Activated CD4-positive, alpha-beta T cell treated with anti-CD3 and anti-CD28 coated beads, Interleukin-2, amount 10 ng/mL, durations not matched to agents 24 days and 14 days (primary cell): ENCODE measurements at regions of chr10 and their contacts with region 1.

Region 1: GRCh38 chr10:31031558-31032257 is at the start of gene ZNF438:
- DNase-seq: peak; percentile 98
- H3K4me3 Mint-ChIP-seq: peak within 1 kb of the TSS; percentile 89
- H3K27ac Mint-ChIP-seq: peak within 1 kb of the TSS; percentile 98
- H3K4me1 Mint-ChIP-seq: peaks cover 9% of the 10 kb centered on the region
- H3K27me3 Mint-ChIP-seq: no peaks in the 10 kb centered on the region
- total RNA-seq, gene ZNF438: 2.4 and 3.2 TPM in 2 replicates

Region 2: DNA sequence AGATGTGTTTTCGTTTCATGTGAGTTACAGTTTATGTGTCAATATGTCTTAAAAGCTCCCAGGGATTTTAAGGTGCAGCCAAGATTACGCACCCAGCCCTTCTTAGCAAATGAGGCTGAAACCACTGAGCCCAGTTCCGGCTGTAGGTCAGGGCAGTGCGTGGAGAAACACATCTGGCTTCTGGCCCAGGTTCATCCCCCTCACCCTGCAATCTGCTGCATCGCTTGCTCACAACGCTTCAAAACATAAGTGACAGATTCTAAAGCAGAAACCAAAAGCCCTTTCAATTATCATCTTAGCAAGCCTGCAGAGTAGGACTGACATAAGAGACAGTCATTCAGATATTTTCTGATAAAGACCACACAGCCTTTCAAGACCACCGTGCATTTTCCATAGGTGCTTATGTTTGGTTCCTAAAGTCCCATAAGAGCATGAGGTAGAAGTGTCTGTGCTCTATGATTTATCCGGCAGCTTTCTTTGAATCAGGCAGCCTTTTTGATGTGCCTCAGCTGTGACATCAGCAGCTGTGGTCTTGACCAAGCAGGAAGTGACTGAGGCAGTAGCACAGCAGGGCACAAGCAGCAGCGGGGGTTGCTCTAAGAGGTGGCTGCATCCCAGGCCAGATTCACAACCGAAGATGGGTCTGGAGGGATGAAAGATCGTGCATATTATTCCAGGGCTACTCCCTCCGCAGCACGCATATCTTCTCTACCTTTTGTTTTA is 330.1 kb before region 1 on chr10:
- intact Hi-C with region 1: loop called (anchors 1 kb)
- DNase-seq: peak; percentile 92
- H3K4me3 Mint-ChIP-seq: peak overlapping the region; percentile 76
- H3K27ac Mint-ChIP-seq: peak overlapping the region; percentile 95
- H3K4me1 Mint-ChIP-seq: peaks cover 78% of the 10 kb centered on the region
- H3K27me3 Mint-ChIP-seq: no peaks in the 10 kb centered on the region

Region 3: DNA sequence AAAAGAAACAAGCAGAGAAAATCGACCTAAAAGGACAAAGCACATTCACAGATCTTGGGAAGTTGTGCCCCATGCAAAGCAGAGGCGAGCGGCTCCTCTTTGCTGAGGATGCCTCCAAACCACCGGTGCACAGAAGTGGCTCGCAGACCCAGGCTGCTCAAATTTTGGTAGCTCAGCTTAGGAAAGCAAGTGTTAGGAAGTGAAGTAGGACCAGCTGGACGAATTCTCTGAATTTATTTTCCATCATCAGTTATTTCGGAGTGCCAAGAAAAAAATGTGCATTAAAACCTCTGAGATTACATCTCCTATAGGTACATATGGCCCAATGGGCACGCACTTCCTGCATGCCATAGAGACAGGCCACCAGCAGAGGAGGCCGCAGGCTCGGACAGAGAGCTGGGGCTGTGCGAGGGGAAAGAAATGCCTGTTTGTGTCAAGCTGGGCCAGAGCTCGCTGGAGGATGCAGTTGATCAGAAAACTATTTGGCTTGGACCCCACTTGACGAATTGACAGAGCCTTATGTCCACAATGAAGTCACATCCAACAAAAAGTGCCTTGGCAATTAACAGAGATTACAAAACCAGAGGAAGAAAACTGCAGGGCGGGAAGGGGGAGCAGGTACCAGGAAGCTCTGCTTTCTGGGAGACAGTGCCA is 279.9 kb before region 1 on chr10:
- intact Hi-C with region 1: no loop called
- DNase-seq: no peak
- H3K4me3 Mint-ChIP-seq: peak overlapping the region; percentile 53
- H3K27ac Mint-ChIP-seq: peak overlapping the region; percentile 59
- H3K4me1 Mint-ChIP-seq: peaks cover 45% of the 10 kb centered on the region
- H3K27me3 Mint-ChIP-seq: no peaks in the 10 kb centered on the region

Region 4: DNA sequence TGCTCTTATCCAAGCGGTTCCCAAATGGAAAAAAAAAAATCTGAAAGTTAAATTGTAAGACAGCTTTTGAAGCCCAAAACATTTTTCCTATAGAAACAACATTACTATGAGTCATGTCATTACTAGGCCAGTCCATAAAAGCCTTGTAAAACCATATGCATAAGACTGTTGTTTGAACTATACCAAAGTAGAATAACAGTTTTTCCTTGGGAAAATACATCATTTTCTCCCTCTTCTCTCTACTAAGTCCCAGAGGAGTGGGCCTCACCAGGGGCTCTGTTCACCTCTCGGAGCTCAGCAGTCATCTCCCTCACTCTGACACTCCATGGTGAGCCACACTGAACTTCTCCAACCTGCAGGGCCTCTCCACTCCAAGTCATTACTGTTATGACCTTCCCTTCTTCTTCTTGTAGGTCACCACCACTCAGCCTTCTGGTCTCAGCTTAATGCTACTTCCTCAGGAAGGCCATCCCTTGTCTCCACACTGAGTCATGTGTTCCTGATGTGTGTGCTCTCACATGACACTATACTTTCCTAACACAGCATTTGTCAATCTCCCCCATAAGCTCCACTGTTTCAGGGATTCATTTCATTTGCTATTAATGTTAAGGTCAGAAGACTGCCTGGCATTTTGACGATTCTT is 32.5 kb before region 1 on chr10:
- intact Hi-C with region 1: loop called (anchors 1 kb)
- DNase-seq: peak; percentile 61
- H3K4me3 Mint-ChIP-seq: peak overlapping the region; percentile 75
- H3K27ac Mint-ChIP-seq: peak overlapping the region; percentile 94
- H3K4me1 Mint-ChIP-seq: peaks cover 40% of the 10 kb centered on the region
- H3K27me3 Mint-ChIP-seq: no peaks in the 10 kb centered on the region

Region 5: GRCh38 chr10:31133628-31134302 is 102.1 kb after region 1 on chr10:
- intact Hi-C with region 1: loop called (anchors 2 kb)
- DNase-seq: peak; percentile 85
- H3K4me3 Mint-ChIP-seq: peak overlapping the region; percentile 87
- H3K27ac Mint-ChIP-seq: peak overlapping the region; percentile 98
- H3K4me1 Mint-ChIP-seq: peaks cover 43% of the 10 kb centered on the region
- H3K27me3 Mint-ChIP-seq: no peaks in the 10 kb centered on the region

Region 6: GRCh38 chr10:31759799-31760626 is 728.3 kb after region 1 on chr10:
- intact Hi-C with region 1: loop called (anchors 1 kb)
- DNase-seq: peak; percentile 98
- H3K4me3 Mint-ChIP-seq: peak overlapping the region; percentile 96
- H3K27ac Mint-ChIP-seq: peak overlapping the region; percentile 91
- H3K4me1 Mint-ChIP-seq: peaks cover 12% of the 10 kb centered on the region
- H3K27me3 Mint-ChIP-seq: no peaks in the 10 kb centered on the region